Activated CD4-positive, alpha-beta memory T cell treated with anti-CD3 and anti-CD28 coated beads for 36 hours (primary cell): ENCODE measurements at regions of chr5 and their contacts with region 1.

Region 1: DNA sequence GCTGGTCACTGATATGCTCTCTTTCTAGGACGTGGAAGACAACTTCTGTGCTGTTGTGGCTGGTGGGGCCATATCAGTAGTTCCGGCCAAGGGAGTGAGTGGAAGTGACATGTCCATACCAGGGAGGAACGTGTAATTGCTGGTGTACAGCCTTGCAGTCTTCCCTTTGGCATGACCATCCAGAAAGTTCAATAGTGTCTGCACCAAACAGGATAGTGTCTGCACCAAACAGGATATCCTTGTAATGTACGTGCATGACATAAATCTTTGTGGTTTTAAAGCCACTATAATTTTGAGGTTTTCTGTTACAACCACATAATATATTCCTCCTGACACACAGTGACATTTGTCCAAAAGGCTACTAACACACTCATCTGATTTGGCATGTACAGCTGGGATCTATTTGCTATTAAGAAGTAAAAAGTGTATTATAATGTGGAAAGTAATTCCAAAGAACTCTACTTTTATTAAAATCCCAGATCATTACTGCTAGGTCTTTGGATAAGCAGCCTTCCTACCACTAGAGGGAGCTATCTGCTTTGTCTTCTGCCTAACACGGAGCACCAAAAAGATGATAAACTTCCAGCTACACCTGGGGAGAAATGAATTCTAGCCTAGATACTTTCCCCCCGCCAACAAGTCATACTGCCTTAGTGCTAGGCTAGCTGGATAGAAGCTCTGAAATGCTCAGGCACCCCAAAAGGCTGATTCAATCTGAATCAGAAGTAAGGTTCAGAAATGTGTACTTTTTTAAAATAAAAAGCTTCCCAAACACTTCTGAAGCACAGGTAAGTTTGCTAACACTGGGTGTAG is 52.7 kb downstream of the RNF145 start:
- DNase-seq: no peak
- H3K4me3 Mint-ChIP-seq: no peak overlapping the region
- H3K27ac Mint-ChIP-seq: peak overlapping the region; percentile 38
- H3K4me1 Mint-ChIP-seq: peaks cover 32% of the 10 kb centered on the region
- H3K27me3 Mint-ChIP-seq: no peaks in the 10 kb centered on the region

Region 2: GRCh38 chr5:159178978-159179377 is 22.3 kb after region 1 on chr5:
- CTCF ChIA-PET with region 1: interaction called, 11 read pairs
- POLR2A ChIA-PET with region 1: no interaction called
- intact Hi-C with region 1: no loop called
- DNase-seq: peak; percentile 56
- H3K4me3 Mint-ChIP-seq: peak overlapping the region; percentile 3
- H3K27ac Mint-ChIP-seq: peak overlapping the region; percentile 93
- H3K4me1 Mint-ChIP-seq: peaks cover 87% of the 10 kb centered on the region
- H3K27me3 Mint-ChIP-seq: no peaks in the 10 kb centered on the region

Region 3: DNA sequence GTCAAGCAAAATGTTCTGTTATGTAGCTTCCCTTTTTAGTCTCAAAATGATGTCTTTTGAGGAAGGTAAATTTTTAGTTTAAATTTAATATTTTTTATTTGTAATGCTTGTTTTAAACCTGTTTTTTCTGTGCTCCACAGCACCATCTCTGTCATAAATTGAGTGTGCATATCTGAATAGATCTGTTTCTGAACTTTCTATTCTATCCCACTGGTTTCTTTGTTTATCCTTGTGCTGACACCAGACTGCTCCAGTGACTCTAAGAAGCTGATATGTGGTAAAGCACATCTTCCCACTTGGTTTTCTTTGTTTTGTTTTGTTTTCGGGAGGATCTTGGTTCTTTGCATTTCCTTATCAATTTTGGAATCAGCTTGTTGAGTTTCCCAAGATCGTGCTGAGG is 59.8 kb after region 1 on chr5:
- CTCF ChIA-PET with region 1: interaction called, 10 read pairs
- POLR2A ChIA-PET with region 1: no interaction called
- intact Hi-C with region 1: no loop called
- DNase-seq: no peak
- H3K4me3 Mint-ChIP-seq: no peak overlapping the region
- H3K27ac Mint-ChIP-seq: no peak overlapping the region
- H3K4me1 Mint-ChIP-seq: peaks cover 9% of the 10 kb centered on the region
- H3K27me3 Mint-ChIP-seq: peaks cover 2% of the 10 kb centered on the region

Region 4: GRCh38 chr5:159310511-159310910 is 153.9 kb after region 1 on chr5:
- CTCF ChIA-PET with region 1: interaction called, 128 read pairs
- POLR2A ChIA-PET with region 1: no interaction called
- intact Hi-C with region 1: no loop called
- DNase-seq: peak; percentile 51
- H3K4me3 Mint-ChIP-seq: peak overlapping the region; percentile 13
- H3K27ac Mint-ChIP-seq: no peak overlapping the region
- H3K4me1 Mint-ChIP-seq: peaks cover 7% of the 10 kb centered on the region
- H3K27me3 Mint-ChIP-seq: peaks cover 11% of the 10 kb centered on the region

Region 5: GRCh38 chr5:159331093-159331973 is 174.7 kb after region 1 on chr5:
- CTCF ChIA-PET with region 1: interaction called, 6 read pairs
- POLR2A ChIA-PET with region 1: no interaction called
- intact Hi-C with region 1: loop called (anchors 5 kb)
- DNase-seq: peak; percentile 84
- H3K4me3 Mint-ChIP-seq: peak overlapping the region; percentile 61
- H3K27ac Mint-ChIP-seq: no peak overlapping the region
- H3K4me1 Mint-ChIP-seq: peaks cover 16% of the 10 kb centered on the region
- H3K27me3 Mint-ChIP-seq: no peaks in the 10 kb centered on the region